ENCODE measurements at regions of chr12 and their contacts with region 1.

Region 1: DNA sequence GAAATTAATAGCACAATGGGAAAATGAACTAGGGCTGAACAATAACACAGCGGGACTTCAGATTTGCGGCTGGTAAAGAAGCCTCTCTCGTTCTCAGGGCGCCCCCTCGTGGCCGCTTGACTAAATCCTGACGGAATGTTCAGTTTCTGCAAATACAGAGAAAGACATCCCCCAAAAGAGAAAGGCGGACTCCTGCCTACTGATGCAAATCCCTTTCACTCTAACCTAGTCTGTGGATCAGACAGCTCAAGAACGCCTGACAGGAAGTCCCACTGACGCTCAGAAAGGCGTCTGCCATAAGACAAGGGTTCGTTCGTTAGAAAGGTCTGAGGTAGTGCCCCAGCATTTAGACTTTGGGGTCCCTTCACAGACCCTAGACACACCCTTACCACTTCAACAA is 2.5 kb downstream of the NUAK1 start:
- DNase-seq: peak; percentile 91

Region 2: DNA sequence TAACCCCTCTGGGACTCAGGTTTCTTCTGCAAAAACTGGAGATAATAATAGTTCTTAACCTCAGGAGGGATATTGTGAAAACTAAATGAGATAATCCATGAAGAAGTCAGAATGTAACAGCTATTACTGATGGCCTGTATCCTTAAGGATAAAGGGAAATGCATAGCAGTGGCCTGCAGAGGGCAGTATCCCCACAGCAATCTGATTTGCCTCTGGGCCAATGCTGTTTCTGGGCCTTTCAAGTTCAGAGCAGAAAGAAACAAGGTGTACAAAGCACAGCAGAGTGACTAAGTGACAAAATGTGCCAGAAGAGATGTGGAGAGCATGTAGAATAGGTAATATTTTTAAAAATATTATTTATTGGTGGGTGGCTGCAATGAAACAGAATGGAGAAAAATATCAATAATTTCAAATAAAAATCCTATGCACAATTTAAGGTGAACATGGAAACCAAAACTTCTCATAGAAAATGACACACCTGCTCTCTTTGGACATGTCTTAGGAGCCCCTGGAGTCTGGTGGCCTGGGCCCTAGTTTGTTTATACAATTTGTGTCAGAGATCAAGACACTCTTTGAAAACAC is 715.5 kb before region 1 on chr12:
- intact Hi-C with region 1: loop called (anchors 5 kb)
- DNase-seq: peak; percentile 82

Region 3: DNA sequence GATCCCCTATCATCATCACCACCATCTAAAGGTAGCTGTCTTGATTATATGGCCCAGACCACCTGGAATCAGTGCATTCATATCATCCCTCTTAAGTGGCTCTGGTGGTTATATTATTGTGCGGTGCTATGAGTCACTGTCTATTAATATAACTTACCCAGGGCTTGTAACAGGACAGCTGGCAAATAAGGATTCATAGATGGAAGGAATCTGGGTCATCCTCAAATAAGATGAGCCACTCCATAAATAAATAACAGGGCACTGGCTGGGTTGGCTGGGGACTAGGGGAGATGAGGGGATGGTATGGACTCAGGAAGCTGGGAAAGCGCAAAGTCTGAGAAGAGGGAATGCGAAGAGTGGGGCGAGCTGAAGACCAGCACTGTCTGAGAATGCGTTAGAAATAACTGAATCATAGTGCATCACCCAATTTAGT is 213.6 kb before region 1 on chr12:
- intact Hi-C with region 1: loop called (anchors 5 kb)
- DNase-seq: no peak

Region 4: DNA sequence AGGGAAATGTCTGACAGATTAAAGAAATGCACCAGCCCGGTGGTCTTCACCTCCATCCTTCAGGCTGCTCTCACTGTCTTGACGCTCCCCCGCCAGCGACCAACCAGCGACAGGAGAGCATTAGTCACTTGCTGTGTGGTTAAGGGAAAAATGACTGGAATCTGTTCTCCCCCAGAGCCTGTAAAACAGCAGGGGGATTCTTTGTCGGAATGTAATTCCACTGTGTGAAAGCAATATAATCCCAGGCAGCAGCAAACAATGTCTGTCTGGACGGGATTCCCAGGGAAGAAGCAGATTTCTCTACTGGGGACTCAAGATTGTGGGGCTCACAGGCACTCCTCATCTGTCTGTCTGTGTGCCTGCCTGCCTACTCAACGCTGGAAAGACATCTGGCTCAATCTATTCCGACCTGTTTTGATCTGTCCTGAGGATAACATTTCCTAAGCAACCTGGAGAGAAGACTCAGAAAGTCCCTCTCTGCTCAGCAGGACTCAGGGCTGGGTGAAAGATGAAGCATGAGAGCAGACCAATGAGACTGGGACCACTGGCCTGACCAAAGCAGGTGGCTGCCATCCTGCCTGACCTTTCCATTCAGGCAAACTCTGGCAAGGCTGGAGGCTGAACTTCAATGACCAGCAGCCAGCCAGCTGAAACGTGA is 52.1 kb before region 1 on chr12:
- intact Hi-C with region 1: loop called (anchors 5 kb)
- DNase-seq: no peak

Region 5: GRCh38 chr12:106179086-106179485 is 42.8 kb after region 1 on chr12:
- intact Hi-C with region 1: no loop called
- DNase-seq: no peak

Region 6: DNA sequence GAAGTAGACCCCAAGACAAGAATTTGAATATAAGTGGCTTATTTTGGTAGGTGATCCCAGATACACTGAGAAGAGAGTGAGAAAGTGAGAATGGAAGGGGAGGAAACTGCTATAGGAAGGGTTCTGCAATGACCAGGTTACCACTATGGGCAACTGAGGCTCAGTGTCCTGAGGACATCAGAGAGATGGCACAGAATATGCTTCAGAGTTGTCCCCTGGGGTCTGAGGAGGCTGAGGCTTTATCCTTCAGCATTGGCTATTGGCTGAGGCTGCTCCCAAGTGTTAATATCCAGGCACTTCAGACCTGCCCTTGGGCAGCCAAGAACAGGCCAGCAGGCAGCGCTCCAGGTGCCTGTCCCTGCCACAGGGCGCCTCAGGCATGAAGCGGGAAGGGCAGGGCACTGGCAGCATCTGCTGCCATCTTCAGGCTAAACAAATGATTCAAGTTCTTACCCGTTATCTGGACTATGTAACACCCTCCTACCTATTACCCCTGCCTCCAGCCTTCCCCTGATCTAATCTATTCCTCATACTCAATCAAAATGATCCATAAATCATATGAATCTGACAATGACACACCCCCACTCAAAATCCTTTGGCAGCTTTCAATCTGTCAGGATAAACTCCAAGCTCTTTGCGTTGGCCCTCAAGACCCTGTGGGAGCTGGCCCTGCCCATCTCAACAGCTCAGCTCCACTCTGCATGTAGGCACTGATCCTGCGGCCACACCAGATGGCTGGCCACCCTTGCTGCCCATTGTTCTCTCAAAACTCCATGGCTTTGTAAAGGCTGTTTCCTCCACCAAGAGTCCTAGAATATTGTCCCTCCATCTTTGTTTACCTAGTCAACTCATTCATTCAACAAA is 69.2 kb after region 1 on chr12:
- intact Hi-C with region 1: loop called (anchors 5 kb)
- DNase-seq: peak; percentile 81